Activated CD8-positive, alpha-beta T cell treated with anti-CD3 and anti-CD28 coated beads for 36 hours (primary cell): ENCODE measurements at regions of chr13 and their contacts with region 1.

Region 1: DNA sequence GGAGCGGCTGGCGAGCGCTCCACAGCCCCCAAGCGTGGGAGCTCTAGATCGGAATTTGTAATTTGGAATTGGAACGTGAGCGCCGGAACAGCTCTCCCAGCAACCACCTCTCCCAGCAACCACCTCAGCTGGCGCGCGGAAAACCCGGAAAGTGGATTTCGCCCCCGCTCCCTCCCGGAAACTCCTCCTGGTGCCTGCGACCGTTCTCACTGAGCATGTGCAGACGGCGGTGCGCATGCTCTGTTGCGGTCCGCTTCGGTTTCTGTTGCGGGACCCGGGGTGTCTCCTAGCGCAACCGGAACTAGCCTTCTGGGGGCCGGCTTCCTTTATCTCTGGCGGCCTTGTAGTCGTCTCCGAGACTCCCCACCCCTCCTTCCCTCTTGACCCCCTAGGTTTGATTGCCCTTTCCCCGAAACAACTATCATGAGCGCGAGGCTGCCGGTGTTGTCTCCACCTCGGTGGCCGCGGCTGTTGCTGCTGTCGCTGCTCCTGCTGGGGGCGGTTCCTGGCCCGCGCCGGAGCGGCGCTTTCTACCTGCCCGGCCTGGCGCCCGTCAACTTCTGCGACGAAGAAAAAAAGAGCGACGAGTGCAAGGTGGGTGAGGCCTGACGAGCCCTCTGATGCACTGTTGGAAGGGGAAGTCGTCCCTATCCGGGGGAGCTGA is at the start of gene TM9SF2:
- DNase-seq: peak; percentile 97
- ATAC-seq: peak; percentile 70
- H3K4me3 Mint-ChIP-seq: peak within 1 kb of the TSS; percentile 84
- H3K27ac Mint-ChIP-seq: peak within 1 kb of the TSS; percentile 95
- H3K4me1 Mint-ChIP-seq: peaks cover 64% of the 10 kb centered on the region
- H3K27me3 Mint-ChIP-seq: no peaks in the 10 kb centered on the region
- CTCF ChIP-seq: no peak
- total RNA-seq, gene TM9SF2: 48.0 to 48.1 TPM

Region 2: DNA sequence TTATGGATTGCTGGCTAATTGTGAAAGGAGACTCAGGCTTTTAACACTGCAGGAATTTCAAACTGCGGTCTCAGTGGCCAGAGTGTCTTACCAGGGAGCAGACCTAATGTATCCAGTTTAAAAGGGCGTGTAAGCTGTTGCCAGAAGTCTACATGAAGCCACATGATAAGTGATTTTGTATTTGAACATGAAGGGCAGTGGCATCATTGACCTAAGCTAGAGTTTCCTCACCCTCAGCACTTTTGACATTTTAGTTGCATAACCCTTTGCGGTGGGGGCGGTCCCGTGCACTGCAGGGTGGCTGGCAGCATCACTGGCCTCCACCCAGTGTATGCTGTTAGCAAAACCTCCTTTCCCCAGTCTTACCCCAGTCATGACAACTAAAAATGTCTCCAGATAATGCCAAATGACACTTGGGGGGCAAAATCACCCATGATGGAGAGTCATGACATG is 219.5 kb before region 1 on chr13:
- CTCF ChIA-PET with region 1: interaction called, 3 read pairs
- POLR2A ChIA-PET with region 1: no interaction called
- intact Hi-C with region 1: loop called (anchors 10 kb)
- DNase-seq: peak; percentile 73
- ATAC-seq: peak; percentile 75
- H3K4me3 Mint-ChIP-seq: no peak overlapping the region
- H3K27ac Mint-ChIP-seq: peak overlapping the region; percentile 28
- H3K4me1 Mint-ChIP-seq: peaks cover 87% of the 10 kb centered on the region
- H3K27me3 Mint-ChIP-seq: no peaks in the 10 kb centered on the region
- CTCF ChIP-seq: no peak

Region 3: GRCh38 chr13:99442273-99442895 is 58.9 kb before region 1 on chr13:
- CTCF ChIA-PET with region 1: interaction called, 44 read pairs
- POLR2A ChIA-PET with region 1: interaction called, 7 read pairs
- intact Hi-C with region 1: loop called (anchors 2 kb)
- DNase-seq: peak; percentile 60
- ATAC-seq: peak; percentile 86
- H3K4me3 Mint-ChIP-seq: no peak overlapping the region
- H3K27ac Mint-ChIP-seq: no peak overlapping the region
- H3K4me1 Mint-ChIP-seq: peaks cover 7% of the 10 kb centered on the region
- H3K27me3 Mint-ChIP-seq: peaks cover 2% of the 10 kb centered on the region
- CTCF ChIP-seq: peak; percentile 97

Region 4: GRCh38 chr13:99516153-99516929 is 15.0 kb after region 1 on chr13:
- CTCF ChIA-PET with region 1: interaction called, 94 read pairs
- POLR2A ChIA-PET with region 1: interaction called, 4 read pairs
- intact Hi-C with region 1: no loop called
- DNase-seq: no peak
- ATAC-seq: no peak
- H3K4me3 Mint-ChIP-seq: no peak overlapping the region
- H3K27ac Mint-ChIP-seq: peak overlapping the region; percentile 9
- H3K4me1 Mint-ChIP-seq: peaks cover 37% of the 10 kb centered on the region
- H3K27me3 Mint-ChIP-seq: no peaks in the 10 kb centered on the region
- CTCF ChIP-seq: no peak